ENCODE measurements at regions of chr9 and their contacts with region 1.

Region 1: GRCh38 chr9:94783102-94783664 is 56.7 kb downstream of the AOPEP start:
- DNase-seq: peak; percentile 95 to 96
- H3K4me3 ChIP-seq: no peak overlapping the region
- H3K27ac ChIP-seq: peak overlapping the region; percentile 72
- H3K4me1 ChIP-seq: peaks cover 21% of the 10 kb centered on the region
- H3K27me3 ChIP-seq: no peaks in the 10 kb centered on the region
- CTCF ChIP-seq: peak in 2 of 3 experiments; percentile 42 to 67
- POLR2A ChIP-seq: no peak

Region 2: DNA sequence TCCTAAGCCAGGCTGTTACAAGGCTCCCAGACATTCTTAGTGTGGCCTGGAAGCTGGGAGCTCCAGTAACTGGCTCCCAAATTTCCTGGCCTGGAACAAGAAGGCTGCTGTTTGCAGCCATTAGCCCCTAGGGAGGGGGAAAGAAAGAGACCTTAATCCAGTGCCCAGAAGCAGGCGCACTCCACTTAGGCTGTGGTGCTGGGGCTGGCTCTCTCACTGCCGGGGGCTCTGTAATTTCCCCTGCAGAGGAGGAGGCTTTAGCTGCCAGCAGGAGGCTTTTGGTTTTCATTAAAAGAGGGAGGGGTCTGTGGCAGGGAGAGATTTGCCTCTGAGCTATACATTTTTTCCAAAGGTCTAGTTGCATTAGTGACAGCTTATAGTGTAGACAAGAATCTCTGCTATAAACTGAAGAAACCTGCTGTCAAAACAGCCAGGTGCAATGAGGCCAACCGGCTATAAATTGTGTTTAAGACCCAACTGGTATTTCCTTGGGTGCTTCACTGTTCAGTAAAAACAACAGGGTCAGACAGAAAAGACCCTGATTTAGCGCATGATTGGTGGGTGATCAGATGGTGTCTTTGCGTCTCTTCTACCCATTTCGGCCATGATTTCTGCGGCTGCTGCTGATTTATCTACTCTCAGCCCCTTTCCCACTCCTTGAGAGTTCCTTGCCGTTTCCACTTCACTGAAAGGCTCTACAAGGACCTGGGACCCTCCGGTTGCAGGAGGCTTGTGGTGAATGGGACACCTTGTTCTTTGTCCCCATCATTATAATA is 198.0 kb after region 1 on chr9:
- intact Hi-C with region 1: no loop called
- DNase-seq: no peak
- H3K4me3 ChIP-seq: no peak overlapping the region
- H3K27ac ChIP-seq: no peak overlapping the region
- H3K4me1 ChIP-seq: peaks cover 3% of the 10 kb centered on the region
- H3K27me3 ChIP-seq: no peaks in the 10 kb centered on the region
- CTCF ChIP-seq: no peak
- POLR2A ChIP-seq: no peak

Region 3: GRCh38 chr9:95065224-95065623 is 282.0 kb after region 1 on chr9:
- intact Hi-C with region 1: loop called (anchors 10 kb)
- DNase-seq: no peak
- H3K4me3 ChIP-seq: no peak overlapping the region
- H3K27ac ChIP-seq: peak overlapping the region; percentile 95
- H3K4me1 ChIP-seq: peaks cover 100% of the 10 kb centered on the region
- H3K27me3 ChIP-seq: no peaks in the 10 kb centered on the region
- CTCF ChIP-seq: no peak
- POLR2A ChIP-seq: no peak

Region 4: GRCh38 chr9:95124582-95125367 is 341.6 kb after region 1 on chr9:
- intact Hi-C with region 1: loop called (anchors 5 kb)
- DNase-seq: no peak
- H3K4me3 ChIP-seq: no peak overlapping the region
- H3K27ac ChIP-seq: peak overlapping the region; percentile 28
- H3K4me1 ChIP-seq: peaks cover 41% of the 10 kb centered on the region
- H3K27me3 ChIP-seq: no peaks in the 10 kb centered on the region
- CTCF ChIP-seq: no peak
- POLR2A ChIP-seq: no peak

Measured in vagina (tissue), 2 donors.